ENCODE measurements at regions of chr1 and their contacts with region 1.

Region 1: DNA sequence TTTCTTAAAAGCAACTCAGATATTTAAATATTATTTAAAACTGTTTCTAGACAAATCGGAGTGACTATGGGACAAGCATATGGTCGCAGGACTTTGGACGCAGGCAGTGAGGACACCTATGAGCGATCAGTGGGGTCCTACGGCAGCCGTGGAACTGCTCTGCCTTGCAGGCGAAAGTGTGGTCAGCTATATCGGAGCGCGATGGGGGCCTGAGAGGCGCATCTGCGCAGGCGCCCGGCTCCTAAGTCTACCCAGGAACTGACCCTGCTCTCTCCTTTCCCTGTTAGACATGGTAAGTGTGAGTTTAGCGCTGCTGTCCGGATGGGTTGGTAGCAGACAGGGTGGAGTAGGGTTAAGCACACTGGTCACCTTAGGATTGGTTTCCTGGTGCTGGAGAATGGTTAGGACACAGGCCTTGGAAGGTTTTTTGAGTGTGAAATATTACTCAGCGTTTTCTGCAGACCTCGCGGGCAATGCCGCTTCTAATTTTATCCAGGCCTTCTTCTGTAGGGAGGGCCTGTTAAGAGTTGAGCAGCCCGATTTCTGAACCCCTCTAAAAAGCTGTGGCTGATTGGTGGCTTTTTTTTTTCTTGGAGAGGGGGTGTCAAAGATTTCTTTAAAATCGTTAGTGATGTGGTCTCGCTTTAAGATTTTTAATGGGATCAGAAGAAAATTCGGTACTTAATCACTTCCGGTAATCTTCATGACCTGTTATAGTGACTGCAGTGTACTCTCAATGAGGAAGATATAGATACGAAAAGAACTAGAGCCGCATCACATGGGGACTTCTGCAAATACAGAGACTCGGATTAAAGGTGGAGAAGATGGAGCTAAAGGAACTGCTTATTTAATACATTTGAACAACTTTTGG is at the start of gene RABGGTB:
- DNase-seq: peak; percentile 87 to 94 (median 91)
- ATAC-seq: peak; percentile 98
- H3K4me3 ChIP-seq: peak within 1 kb of the TSS; percentile 97
- H3K4me3 Mint-ChIP-seq: peak within 1 kb of the TSS; percentile 88 to 99 (median 97)
- H3K27ac ChIP-seq: peak within 1 kb of the TSS; percentile 83
- H3K27ac Mint-ChIP-seq: peak within 1 kb of the TSS; percentile 85 to 99 (median 97)
- H3K4me1 ChIP-seq: peaks cover 33 to 44% of the 10 kb centered on the region in 2 donors
- H3K4me1 Mint-ChIP-seq: peaks cover 44 to 62% (median 48%) of the 10 kb centered on the region in 7 donors
- H3K27me3 ChIP-seq: no peaks in the 10 kb centered on the region
- H3K27me3 Mint-ChIP-seq: peaks cover 0 to 7% (median 0%) of the 10 kb centered on the region in 5 donors
- total RNA-seq, gene RABGGTB: 89.7 to 140 (median 101) TPM

Region 2: DNA sequence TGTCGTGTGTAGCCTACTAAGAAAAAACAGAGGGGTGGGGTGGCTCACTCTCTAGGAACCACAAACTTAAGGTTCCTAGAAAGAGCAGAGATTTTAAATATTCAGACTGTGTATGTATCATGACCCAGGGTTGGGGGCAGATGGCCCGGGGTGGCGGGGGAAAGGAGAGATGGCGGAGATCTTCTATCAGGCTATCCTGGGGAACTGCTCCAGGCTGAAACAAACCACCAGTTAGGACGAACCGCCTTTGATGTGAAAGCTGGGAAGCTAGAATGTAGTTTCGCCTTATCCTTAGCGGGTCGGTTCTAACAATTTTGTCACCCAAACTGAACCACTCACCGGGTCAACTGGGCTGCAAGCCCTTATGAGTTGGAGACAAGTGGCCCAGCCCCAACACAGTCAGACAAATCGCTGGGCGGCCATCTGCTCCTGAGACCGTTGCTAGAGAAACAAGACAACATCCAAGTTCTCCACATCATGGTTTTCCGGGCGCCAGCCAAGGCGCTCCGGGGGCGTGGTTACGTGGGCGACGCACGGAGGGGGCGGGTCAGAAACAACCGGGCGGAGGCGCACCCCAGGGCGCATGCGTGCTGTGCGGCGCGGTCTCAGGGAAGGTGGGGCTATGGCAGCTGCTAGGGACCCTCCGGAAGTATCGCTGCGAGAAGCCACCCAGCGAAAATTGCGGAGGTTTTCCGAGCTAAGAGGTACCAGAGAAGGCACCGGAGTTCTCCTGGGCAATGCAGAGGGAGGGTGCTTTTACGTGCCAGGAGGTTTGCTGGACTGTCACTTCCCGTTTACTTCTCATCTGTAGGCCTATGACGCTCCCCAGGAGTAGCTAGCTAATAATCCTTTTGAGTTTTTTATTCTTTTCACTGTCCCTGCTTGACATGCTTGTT is 1588.3 kb before region 1 on chr1 and contains the starts of genes FPGT and LRRIQ3:
- CTCF ChIA-PET with region 1: no interaction called
- POLR2A ChIA-PET with region 1: no interaction called
- intact Hi-C with region 1: loop called in 1 of 2 experiments (anchors 2 kb)
- DNase-seq: peak; percentile 90 to 97 (median 96)
- ATAC-seq: peak; percentile 99
- H3K4me3 ChIP-seq: peak within 1 kb of the TSS; percentile 85
- H3K4me3 Mint-ChIP-seq: peak within 1 kb of the TSS; percentile 91 to 99 (median 94)
- H3K27ac ChIP-seq: peak within 1 kb of the TSS; percentile 84
- H3K27ac Mint-ChIP-seq: peak within 1 kb of the TSS; percentile 91 to 98 (median 96)
- H3K4me1 ChIP-seq: peaks cover 5% of the 10 kb centered on the region in 2 donors
- H3K4me1 Mint-ChIP-seq: peaks cover 16 to 39% (median 19%) of the 10 kb centered on the region in 7 donors
- H3K27me3 ChIP-seq: no peaks in the 10 kb centered on the region
- H3K27me3 Mint-ChIP-seq: peaks cover 0 to 7% (median 0%) of the 10 kb centered on the region in 5 donors
- total RNA-seq, gene FPGT: 5.6 to 17.7 (median 12.5) TPM
- total RNA-seq, gene LRRIQ3: 0.32 to 1.7 (median 0.47) TPM

Region 3: DNA sequence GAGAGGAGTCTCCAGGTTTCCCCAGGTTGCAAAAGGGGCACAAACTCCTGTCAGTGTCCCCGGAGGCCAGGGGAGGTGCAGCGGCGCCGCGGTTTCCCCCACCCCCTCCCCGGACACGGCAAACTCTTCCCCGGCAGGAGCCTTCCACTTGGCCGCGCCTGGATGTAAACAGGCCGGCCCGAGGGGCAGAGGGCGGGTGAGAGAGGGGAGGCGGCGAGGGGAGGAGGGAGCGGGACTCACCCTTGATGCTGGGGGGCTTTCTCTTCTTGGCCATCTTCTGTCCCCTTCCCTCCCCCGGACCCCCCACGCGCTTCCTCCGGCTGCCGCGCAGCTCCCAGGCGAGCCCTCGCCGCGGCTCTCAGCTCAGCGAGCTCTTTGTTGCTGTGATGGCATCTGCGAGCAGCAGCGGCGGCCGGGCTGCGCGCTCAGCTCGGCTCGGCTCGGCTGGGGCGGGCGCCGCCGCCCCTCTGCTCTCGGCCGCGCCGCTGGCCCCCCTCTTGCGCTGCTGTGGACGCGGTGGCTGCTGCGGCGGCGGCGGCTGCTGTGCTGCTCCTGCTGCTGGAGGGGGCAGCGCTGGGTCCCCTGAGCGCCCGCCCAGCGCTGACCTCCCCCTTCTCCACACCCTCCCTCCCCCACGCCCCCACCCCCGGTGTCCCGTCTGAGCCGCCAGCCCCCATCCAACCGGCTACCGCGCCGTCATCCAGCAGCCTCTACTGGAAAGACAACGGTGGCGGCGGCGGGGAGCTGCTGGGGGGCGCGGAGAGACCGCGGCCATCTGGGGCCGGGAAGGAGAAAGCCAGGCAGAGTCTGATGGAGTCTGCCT is 170.4 kb before region 1 on chr1:
- CTCF ChIA-PET with region 1: no interaction called
- POLR2A ChIA-PET with region 1: no interaction called
- intact Hi-C with region 1: loop called in 1 of 2 experiments (anchors 10 kb)
- DNase-seq: peak in 4 of 9 donors; percentile 7 to 18 (median 16)
- ATAC-seq: peak; percentile 61
- H3K4me3 ChIP-seq: no peak overlapping the region
- H3K4me3 Mint-ChIP-seq: peak overlapping the region; percentile 27 to 83 (median 78)
- H3K27ac ChIP-seq: no peak overlapping the region
- H3K27ac Mint-ChIP-seq: no peak overlapping the region
- H3K4me1 ChIP-seq: peaks cover 4 to 8% of the 10 kb centered on the region in 2 donors
- H3K4me1 Mint-ChIP-seq: peaks cover 12 to 32% (median 21%) of the 10 kb centered on the region in 7 donors
- H3K27me3 ChIP-seq: peaks cover 0 to 28% of the 10 kb centered on the region in 2 donors
- H3K27me3 Mint-ChIP-seq: peaks cover 73 to 88% (median 82%) of the 10 kb centered on the region in 5 donors

Region 4: GRCh38 chr1:75745276-75745675 is 40.9 kb before region 1 on chr1:
- CTCF ChIA-PET with region 1: no interaction called
- POLR2A ChIA-PET with region 1: no interaction called
- intact Hi-C with region 1: loop called in 1 of 2 experiments (anchors 5 kb)
- DNase-seq: no peak
- ATAC-seq: peak; percentile 87
- H3K4me3 ChIP-seq: no peak overlapping the region
- H3K4me3 Mint-ChIP-seq: no peak overlapping the region
- H3K27ac ChIP-seq: no peak overlapping the region
- H3K27ac Mint-ChIP-seq: peak overlapping the region in 2 of 9 donors; percentile 28 to 41
- H3K4me1 ChIP-seq: no peaks in the 10 kb centered on the region
- H3K4me1 Mint-ChIP-seq: peaks cover 0 to 6% (median 0%) of the 10 kb centered on the region in 7 donors
- H3K27me3 ChIP-seq: no peaks in the 10 kb centered on the region
- H3K27me3 Mint-ChIP-seq: no peaks in the 10 kb centered on the region

Region 5: DNA sequence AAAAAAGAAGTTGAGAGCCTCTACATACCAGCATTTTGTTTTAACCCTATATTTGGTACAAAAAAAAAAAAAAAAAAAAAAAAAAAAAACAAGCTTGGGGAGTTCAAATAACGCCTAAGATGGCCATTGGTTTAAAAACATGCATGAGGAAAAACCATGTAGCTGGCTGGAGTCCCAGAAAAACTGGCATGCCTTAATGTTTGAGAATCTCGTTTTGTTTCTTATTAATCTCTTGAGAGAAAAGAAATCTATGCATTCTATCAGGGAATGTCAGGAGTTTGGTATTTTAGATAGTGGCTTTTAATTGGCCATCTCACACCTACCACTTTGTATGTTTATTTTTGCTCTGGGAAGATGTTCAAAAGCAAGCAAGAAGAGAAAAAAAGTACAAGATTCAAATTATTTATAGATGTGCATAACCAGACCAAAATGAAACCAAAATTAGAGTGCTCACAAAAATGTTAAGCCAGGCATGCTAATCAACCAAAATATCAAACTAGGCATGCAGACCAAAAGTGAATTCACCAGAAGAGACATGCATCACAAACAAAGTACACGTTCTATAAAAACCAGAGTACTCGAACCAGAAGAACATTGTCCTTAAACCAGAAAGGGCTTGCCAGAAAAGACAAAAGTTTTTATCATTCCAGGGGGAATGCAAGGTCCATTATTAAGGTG is 1652.2 kb after region 1 on chr1:
- CTCF ChIA-PET with region 1: no interaction called
- POLR2A ChIA-PET with region 1: no interaction called
- intact Hi-C with region 1: loop called in 1 of 2 experiments (anchors 10 kb)
- DNase-seq: no peak
- ATAC-seq: no peak
- H3K4me3 ChIP-seq: peak overlapping the region; percentile 20
- H3K4me3 Mint-ChIP-seq: peak overlapping the region; percentile 39 to 80 (median 74)
- H3K27ac ChIP-seq: no peak overlapping the region
- H3K27ac Mint-ChIP-seq: peak overlapping the region in 8 of 9 donors; percentile 49 to 90 (median 83)
- H3K4me1 ChIP-seq: peaks cover 0 to 34% of the 10 kb centered on the region in 2 donors
- H3K4me1 Mint-ChIP-seq: peaks cover 25 to 72% (median 54%) of the 10 kb centered on the region in 7 donors
- H3K27me3 ChIP-seq: no peaks in the 10 kb centered on the region
- H3K27me3 Mint-ChIP-seq: no peaks in the 10 kb centered on the region

Region 6: DNA sequence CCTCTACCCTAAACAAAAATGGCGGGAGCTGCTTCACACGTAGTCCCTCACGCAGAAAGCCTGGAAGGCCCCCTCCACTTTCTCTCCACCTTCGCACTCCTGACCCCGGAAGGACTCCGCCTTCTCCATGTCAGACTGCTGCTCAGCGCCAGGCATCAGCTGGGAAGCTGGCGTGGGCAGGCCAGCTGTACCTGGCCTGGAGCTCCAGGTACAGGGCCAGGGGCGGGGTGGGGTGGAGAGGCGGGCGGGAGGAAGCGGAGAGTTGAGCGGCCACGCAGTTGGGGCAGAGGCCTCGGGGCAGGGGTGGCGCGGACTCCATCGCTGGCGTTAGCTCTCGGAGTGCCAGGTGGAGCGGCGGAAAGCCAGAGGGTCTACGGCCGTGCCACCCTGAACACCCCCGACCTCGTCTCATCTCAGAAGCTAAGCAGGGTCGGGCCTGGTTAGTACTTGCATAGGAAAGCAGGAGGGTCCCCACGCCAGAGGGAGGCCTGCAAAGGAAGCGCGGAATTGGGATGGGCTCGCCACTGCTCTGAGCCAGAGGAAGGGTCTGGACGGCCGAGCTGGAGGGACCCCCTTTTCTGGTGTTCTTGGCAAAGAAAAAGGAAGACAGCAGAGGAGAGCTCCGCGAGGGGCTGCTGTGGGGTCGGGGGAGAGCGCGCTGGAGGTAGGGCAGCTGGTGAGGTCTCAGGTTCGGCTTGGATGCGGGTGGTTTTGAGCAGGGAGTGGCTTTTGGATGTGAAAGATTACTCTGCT is 1993.5 kb after region 1 on chr1 and contains the start of gene MIGA1:
- CTCF ChIA-PET with region 1: no interaction called
- POLR2A ChIA-PET with region 1: no interaction called
- intact Hi-C with region 1: loop called (anchors 1 to 5 kb)
- DNase-seq: peak; percentile 61 to 92 (median 86)
- ATAC-seq: peak; percentile 99
- H3K4me3 ChIP-seq: peak within 1 kb of the TSS; percentile 68
- H3K4me3 Mint-ChIP-seq: peak within 1 kb of the TSS; percentile 90 to 98 (median 94)
- H3K27ac ChIP-seq: peak within 1 kb of the TSS; percentile 87
- H3K27ac Mint-ChIP-seq: peak within 1 kb of the TSS; percentile 88 to 96 (median 93)
- H3K4me1 ChIP-seq: peaks cover 11 to 15% of the 10 kb centered on the region in 2 donors
- H3K4me1 Mint-ChIP-seq: peaks cover 21 to 54% (median 49%) of the 10 kb centered on the region in 7 donors
- H3K27me3 ChIP-seq: no peaks in the 10 kb centered on the region
- H3K27me3 Mint-ChIP-seq: peaks cover 0 to 3% (median 0%) of the 10 kb centered on the region in 5 donors
- total RNA-seq, gene MIGA1: 12.1 to 23.5 (median 15.9) TPM